Common myeloid progenitor, CD34-positive (primary cell): ENCODE measurements at regions of chr13 and their contacts with region 1.

Region 1: DNA sequence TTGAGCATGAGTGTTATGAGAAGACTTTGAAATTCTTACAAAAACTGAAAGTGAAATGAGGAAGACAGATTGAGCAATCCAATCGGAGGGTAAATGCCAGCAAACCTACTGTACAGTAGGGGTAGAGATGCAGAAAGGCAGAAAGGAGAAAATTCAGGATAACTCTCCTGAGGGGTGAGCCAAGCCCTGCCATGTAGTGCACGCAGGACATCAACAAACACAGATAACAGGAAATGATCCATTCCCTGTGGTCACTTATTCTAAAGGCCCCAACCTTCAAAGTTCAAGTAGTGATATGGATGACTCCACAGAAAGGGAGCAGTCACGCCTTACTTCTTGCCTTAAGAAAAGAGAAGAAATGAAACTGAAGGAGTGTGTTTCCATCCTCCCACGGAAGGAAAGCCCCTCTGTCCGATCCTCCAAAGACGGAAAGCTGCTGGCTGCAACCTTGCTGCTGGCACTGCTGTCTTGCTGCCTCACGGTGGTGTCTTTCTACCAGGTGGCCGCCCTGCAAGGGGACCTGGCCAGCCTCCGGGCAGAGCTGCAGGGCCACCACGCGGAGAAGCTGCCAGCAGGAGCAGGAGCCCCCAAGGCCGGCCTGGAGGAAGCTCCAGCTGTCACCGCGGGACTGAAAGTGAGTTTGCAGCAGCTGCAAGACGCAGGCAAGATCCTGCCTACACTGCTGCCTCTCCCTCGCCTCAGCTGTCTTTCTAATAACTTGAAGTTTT is at the start of gene TNFSF13B:
- DNase-seq: peak; percentile 68 to 88 (median 81)
- H3K4me3 ChIP-seq: peak within 1 kb of the TSS; percentile 55 to 86 (median 73)
- H3K27ac ChIP-seq: peak within 1 kb of the TSS; percentile 58 to 80
- H3K4me1 ChIP-seq: peaks cover 49 to 71% (median 58%) of the 10 kb centered on the region in 4 experiments
- H3K27me3 ChIP-seq: no peaks in the 10 kb centered on the region

Region 2: GRCh38 chr13:108281901-108282300 is 12.1 kb after region 1 on chr13:
- CTCF ChIA-PET with region 1: interaction called, 14 read pairs
- POLR2A ChIA-PET with region 1: no interaction called
- DNase-seq: peak in 1 of 3 donors; percentile 44
- H3K4me3 ChIP-seq: no peak overlapping the region
- H3K27ac ChIP-seq: no peak overlapping the region
- H3K4me1 ChIP-seq: no peaks in the 10 kb centered on the region
- H3K27me3 ChIP-seq: no peaks in the 10 kb centered on the region

Region 3: DNA sequence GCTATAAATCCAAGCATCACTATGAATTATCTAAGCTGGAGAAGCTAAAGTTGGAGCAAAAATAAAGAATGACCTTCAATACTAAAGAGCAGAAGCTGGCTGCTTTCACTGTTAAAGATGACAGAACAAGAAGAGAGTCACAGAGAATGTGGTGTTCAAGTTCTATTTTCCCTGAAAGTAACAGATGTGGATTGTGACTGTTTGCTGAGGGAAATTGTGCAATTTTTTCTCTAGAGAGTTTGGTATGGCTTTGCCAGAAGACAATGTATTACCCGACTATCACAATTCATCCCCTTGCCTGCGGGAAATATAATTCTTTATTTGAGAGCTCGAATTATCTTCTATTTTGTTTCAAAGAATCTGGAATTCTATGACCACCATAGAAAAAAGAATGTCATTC is 82.8 kb after region 1 on chr13:
- CTCF ChIA-PET with region 1: no interaction called
- POLR2A ChIA-PET with region 1: no interaction called
- DNase-seq: peak in 2 of 3 donors; percentile 14 to 17
- H3K4me3 ChIP-seq: no peak overlapping the region
- H3K27ac ChIP-seq: no peak overlapping the region
- H3K4me1 ChIP-seq: no peaks in the 10 kb centered on the region
- H3K27me3 ChIP-seq: no peaks in the 10 kb centered on the region